Tibial artery (tissue), 4 donors: ENCODE measurements at regions of chr7 and their contacts with region 1.

Region 1: DNA sequence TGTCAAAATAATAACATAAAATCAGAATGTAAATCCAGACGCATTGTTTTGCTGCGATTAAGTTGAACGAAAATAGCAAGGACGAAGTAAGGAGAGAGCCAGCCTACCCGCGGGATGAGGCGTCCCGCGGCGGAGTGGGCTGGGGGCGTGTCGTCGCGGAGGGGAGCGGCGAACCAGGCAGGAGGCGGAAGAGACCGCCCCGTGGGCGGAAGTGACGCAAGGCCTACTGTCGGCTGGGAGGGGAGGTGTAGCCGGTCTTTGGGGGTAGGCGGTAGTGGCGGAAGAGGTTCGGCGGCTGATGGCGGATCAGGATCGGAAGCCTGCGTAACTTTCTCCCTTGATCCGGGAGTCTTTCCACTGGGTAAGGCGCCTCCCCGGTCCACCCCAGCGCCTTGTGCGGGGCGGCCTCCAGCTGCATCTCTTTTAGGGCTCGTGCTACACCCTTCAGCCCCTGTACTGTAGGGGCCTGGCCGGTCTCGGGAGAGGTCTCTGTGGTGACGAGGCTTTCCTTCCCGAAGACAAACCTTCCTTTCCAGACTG is at the start of gene TAX1BP1:
- DNase-seq: peak; percentile 94 to 98
- H3K4me3 ChIP-seq: peak within 1 kb of the TSS; percentile 94 to 99
- H3K27ac ChIP-seq: peak within 1 kb of the TSS; percentile 98 to 99
- H3K4me1 ChIP-seq: peaks cover 0 to 39% (median 15%) of the 10 kb centered on the region in 4 donors
- H3K27me3 ChIP-seq: no peaks in the 10 kb centered on the region
- CTCF ChIP-seq: no peak

Region 2: GRCh38 chr7:27547401-27547800 is 192.6 kb before region 1 on chr7:
- intact Hi-C with region 1: no loop called
- DNase-seq: no peak
- H3K4me3 ChIP-seq: no peak overlapping the region
- H3K27ac ChIP-seq: no peak overlapping the region
- H3K4me1 ChIP-seq: no peaks in the 10 kb centered on the region
- H3K27me3 ChIP-seq: no peaks in the 10 kb centered on the region
- CTCF ChIP-seq: no peak

Region 3: DNA sequence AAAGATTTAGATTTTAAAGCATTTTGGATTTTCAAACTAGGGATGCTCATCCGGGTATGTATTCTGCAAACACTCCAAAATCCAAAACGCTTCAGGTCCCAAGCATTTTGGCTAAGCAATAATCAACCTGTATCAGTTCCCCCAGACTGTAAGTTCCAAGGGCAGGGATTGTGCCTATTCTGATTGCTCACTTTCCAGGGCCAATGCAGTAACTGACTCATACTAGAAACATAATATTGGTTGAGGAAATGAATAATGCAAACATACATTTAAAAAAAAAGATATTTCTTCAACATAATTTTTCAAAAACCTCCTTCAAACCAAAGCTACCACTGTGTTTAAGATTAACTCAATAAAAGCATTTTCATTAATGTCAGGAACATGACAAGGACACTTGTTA is 146.8 kb before region 1 on chr7:
- intact Hi-C with region 1: no loop called
- DNase-seq: no peak
- H3K4me3 ChIP-seq: no peak overlapping the region
- H3K27ac ChIP-seq: no peak overlapping the region
- H3K4me1 ChIP-seq: no peaks in the 10 kb centered on the region
- H3K27me3 ChIP-seq: no peaks in the 10 kb centered on the region
- CTCF ChIP-seq: no peak

Region 4: GRCh38 chr7:27662490-27663205 is 77.3 kb before region 1 on chr7 and contains the start of gene HIBADH:
- intact Hi-C with region 1: loop called (anchors 1 kb)
- DNase-seq: peak; percentile 100
- H3K4me3 ChIP-seq: peak within 1 kb of the TSS; percentile 71 to 90
- H3K27ac ChIP-seq: peak within 1 kb of the TSS; percentile 86 to 96
- H3K4me1 ChIP-seq: peaks cover 0 to 15% (median 7%) of the 10 kb centered on the region in 4 donors
- H3K27me3 ChIP-seq: no peaks in the 10 kb centered on the region
- CTCF ChIP-seq: peak; percentile 26 to 48

Region 5: GRCh38 chr7:27793780-27794179 is 53.8 kb after region 1 on chr7:
- intact Hi-C with region 1: no loop called
- DNase-seq: no peak
- H3K4me3 ChIP-seq: no peak overlapping the region
- H3K27ac ChIP-seq: no peak overlapping the region
- H3K4me1 ChIP-seq: no peaks in the 10 kb centered on the region
- H3K27me3 ChIP-seq: no peaks in the 10 kb centered on the region
- CTCF ChIP-seq: no peak

Region 6: GRCh38 chr7:28083164-28083997 is 343.4 kb after region 1 on chr7:
- intact Hi-C with region 1: loop called (anchors 5 kb)
- DNase-seq: peak; percentile 72 to 82
- H3K4me3 ChIP-seq: no peak overlapping the region
- H3K27ac ChIP-seq: peak overlapping the region; percentile 54 to 63
- H3K4me1 ChIP-seq: peaks cover 0 to 52% (median 27%) of the 10 kb centered on the region in 4 donors
- H3K27me3 ChIP-seq: no peaks in the 10 kb centered on the region
- CTCF ChIP-seq: peak in 1 of 2 experiments; percentile 15